ENCODE measurements at regions of chr12 and their contacts with region 1.

Region 1: DNA sequence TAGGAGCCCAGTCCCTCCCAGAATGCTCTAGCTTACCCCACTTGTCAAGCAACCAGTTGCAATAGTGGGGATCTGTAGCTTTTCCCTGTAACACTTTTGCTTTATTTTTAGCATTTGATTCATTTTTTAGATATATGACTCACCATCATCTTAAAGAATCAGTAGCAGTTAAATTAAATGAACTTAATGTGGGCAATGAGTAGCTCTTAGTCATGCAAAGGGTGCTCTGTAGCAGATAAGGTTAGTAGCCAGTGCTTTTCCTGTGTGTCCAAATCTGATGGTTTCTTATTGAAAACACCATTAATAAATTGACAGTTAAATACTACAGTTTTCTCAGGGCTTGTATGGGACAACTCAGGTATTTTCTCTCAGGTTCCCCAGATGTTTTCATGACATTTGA is 311.8 kb downstream of the RERGL start:
- DNase-seq: no peak
- ATAC-seq: no peak
- H3K4me3 ChIP-seq: no peak overlapping the region
- H3K4me3 Mint-ChIP-seq: no peak overlapping the region
- H3K27ac ChIP-seq: no peak overlapping the region
- H3K27ac Mint-ChIP-seq: no peak overlapping the region
- H3K4me1 ChIP-seq: no peaks in the 10 kb centered on the region
- H3K4me1 Mint-ChIP-seq: no peaks in the 10 kb centered on the region
- H3K27me3 ChIP-seq: no peaks in the 10 kb centered on the region
- H3K27me3 Mint-ChIP-seq: no peaks in the 10 kb centered on the region
- CTCF ChIP-seq: no peak

Region 2: DNA sequence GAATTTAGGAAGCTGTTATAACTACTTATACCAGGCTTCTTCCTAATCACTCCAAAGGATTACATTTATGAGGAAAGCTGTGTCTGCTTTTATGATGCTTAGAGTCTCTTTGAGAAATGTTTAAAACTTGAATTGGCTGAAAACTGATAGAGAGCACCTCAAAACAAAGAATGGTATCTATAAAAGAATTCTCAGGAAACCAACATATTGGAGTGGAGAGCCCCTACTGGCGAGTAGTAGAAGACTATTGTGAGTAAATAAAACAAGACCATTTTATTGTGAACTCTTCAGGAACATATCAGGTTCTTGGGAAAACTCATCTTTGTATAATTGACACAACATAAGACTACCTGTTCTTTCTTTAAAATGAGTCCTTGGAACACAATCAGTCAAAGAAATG is 266.9 kb before region 1 on chr12:
- CTCF ChIA-PET with region 1: no interaction called
- POLR2A ChIA-PET with region 1: no interaction called
- intact Hi-C with region 1: no loop called
- DNase-seq: no peak
- ATAC-seq: no peak
- H3K4me3 ChIP-seq: no peak overlapping the region
- H3K4me3 Mint-ChIP-seq: no peak overlapping the region
- H3K27ac ChIP-seq: no peak overlapping the region
- H3K27ac Mint-ChIP-seq: no peak overlapping the region
- H3K4me1 ChIP-seq: no peaks in the 10 kb centered on the region
- H3K4me1 Mint-ChIP-seq: no peaks in the 10 kb centered on the region
- H3K27me3 ChIP-seq: no peaks in the 10 kb centered on the region
- H3K27me3 Mint-ChIP-seq: no peaks in the 10 kb centered on the region
- CTCF ChIP-seq: no peak

Region 3: GRCh38 chr12:17866802-17867201 is 88.6 kb after region 1 on chr12:
- CTCF ChIA-PET with region 1: no interaction called
- POLR2A ChIA-PET with region 1: no interaction called
- intact Hi-C with region 1: loop called (anchors 2 kb)
- DNase-seq: no peak
- ATAC-seq: no peak
- H3K4me3 ChIP-seq: no peak overlapping the region
- H3K4me3 Mint-ChIP-seq: no peak overlapping the region
- H3K27ac ChIP-seq: no peak overlapping the region
- H3K27ac Mint-ChIP-seq: no peak overlapping the region
- H3K4me1 ChIP-seq: no peaks in the 10 kb centered on the region
- H3K4me1 Mint-ChIP-seq: no peaks in the 10 kb centered on the region
- H3K27me3 ChIP-seq: no peaks in the 10 kb centered on the region
- H3K27me3 Mint-ChIP-seq: no peaks in the 10 kb centered on the region
- CTCF ChIP-seq: no peak

Measured in CD8-positive, alpha-beta T cell (primary cell).